HepG2 (cell line): ENCODE measurements at regions of chr3 and their contacts with region 1.

Region 1: GRCh38 chr3:8548502-8549275 is 47.1 kb downstream of the LMCD1 start:
- DNase-seq: no peak
- ATAC-seq: no peak
- H3K4me3 ChIP-seq: no peak overlapping the region
- H3K27ac ChIP-seq: no peak overlapping the region
- H3K4me1 ChIP-seq: no peaks in the 10 kb centered on the region
- H3K27me3 ChIP-seq: no peaks in the 10 kb centered on the region
- CTCF ChIP-seq: no peak
- EP300 ChIP-seq: no peak
- POLR2A ChIP-seq: no peak
- RAD21 ChIP-seq: no peak

Region 2: DNA sequence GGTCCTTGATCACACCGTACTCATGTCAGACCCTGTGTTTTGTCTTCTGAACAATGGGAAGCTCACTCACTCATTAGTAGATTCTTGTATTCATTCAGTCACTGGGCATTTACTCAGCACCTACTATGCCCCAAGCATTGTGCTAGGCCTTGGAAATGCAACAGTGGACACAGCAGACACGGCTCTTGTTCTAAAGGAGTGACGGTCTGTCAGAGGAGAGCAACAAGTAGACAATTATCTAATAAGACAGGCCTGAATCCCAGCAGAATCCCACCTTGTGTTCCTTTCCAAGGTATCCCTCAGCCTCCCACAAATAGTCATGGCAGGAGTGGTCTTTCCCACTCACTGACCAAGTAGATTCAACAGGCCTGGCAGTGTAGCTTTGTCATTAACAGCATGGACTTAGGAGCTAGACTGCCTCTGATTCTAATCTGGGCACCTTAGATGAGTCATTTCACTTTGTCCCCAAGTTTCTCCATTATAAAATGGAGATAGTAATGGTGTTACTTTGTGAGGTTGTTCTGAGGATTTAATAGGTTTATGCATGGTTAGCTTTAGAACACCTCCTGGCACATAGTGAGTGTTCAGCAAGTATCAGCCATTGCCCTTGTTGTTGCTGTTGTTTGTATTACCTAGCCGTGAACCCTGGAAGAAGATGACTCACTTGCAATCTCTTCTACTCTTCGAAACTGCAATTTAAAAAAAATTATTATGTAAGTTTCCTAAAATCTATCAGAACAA is 26.8 kb after region 1 on chr3:
- CTCF ChIA-PET with region 1: no interaction called
- POLR2A ChIA-PET with region 1: no interaction called
- in situ Hi-C with region 1: no loop called
- intact Hi-C with region 1: loop called (anchors 1 kb)
- DNase-seq: no peak
- ATAC-seq: no peak
- H3K4me3 ChIP-seq: no peak overlapping the region
- H3K27ac ChIP-seq: no peak overlapping the region
- H3K4me1 ChIP-seq: no peaks in the 10 kb centered on the region; the same call in 1 of the 2 replicates
- H3K27me3 ChIP-seq: no peaks in the 10 kb centered on the region
- CTCF ChIP-seq: no peak
- EP300 ChIP-seq: no peak
- POLR2A ChIP-seq: no peak
- RAD21 ChIP-seq: no peak